A549 (cell line): ENCODE measurements at regions of chr2 and their contacts with region 1.

Region 1: DNA sequence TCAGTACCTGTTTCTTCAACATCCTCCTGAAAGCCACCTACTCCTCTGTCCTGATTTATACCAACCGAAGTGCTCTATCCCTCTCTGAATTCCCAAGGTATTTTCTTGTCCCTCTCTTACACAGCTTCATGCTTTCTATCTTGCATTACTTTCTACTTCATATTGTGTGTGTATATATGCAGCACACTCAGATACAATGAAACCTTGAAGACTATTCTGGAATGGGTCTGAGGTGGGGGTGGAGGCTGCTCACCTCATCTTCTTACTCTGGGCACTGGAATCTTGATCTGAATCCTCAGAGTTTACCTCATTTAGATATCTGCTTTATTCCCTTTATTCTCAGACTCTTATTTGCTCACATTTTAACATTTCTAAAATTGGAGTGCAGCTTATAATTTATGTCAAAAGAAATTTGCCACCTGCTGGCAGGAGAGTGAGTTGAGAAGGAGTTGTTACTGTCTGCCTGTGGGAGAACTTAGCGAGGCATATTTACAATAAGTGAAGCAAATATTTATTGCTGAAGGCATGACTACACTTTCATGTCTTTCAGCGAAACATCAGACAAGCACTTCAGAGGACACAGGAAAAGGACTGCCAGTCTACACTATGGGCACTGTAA is 16.6 kb upstream of the KIAA2012 start:
- DNase-seq: peak in 1 of 2 experiments; percentile 33
- ATAC-seq: peak; percentile 70 to 79; a peak in 5 of 6 replicates
- H3K4me3 ChIP-seq: no peak overlapping the region
- H3K27ac ChIP-seq: no peak overlapping the region
- H3K4me1 ChIP-seq: no peaks in the 10 kb centered on the region
- CTCF ChIP-seq: peak; percentile 40
- EP300 ChIP-seq: no peak
- POLR2A ChIP-seq: no peak
- RAD21 ChIP-seq: peak; percentile 33 to 36; a peak in 4 of 5 replicates

Region 2: DNA sequence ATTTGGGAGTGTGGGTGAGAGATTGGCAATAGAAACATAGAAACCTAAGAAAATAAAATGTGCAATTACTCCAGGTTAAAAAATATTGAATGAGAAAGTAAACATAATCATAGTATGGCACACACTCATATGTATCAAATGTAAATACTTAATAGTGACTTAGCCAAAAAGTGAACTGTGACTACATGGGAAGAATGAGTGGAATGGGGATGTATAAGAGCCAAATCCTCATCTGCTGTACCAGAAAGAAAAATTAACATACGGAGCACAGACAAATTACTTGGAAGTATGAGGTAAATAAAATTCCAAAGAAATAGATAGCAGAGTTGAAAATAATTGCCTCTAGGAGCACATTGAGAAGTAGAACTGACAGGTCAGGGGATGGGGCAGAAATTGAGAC is 703.4 kb before region 1 on chr2:
- CTCF ChIA-PET with region 1: no interaction called
- POLR2A ChIA-PET with region 1: no interaction called
- DNase-seq: no peak
- ATAC-seq: no peak
- H3K4me3 ChIP-seq: no peak overlapping the region
- H3K27ac ChIP-seq: no peak overlapping the region
- H3K4me1 ChIP-seq: no peaks in the 10 kb centered on the region
- CTCF ChIP-seq: no peak
- EP300 ChIP-seq: no peak
- POLR2A ChIP-seq: no peak
- RAD21 ChIP-seq: no peak

Region 3: GRCh38 chr2:202043475-202043874 is 13.0 kb before region 1 on chr2:
- CTCF ChIA-PET with region 1: interaction called, 11 read pairs
- POLR2A ChIA-PET with region 1: no interaction called
- DNase-seq: no peak
- ATAC-seq: no peak
- H3K4me3 ChIP-seq: no peak overlapping the region
- H3K27ac ChIP-seq: no peak overlapping the region
- H3K4me1 ChIP-seq: peaks cover 22% of the 10 kb centered on the region
- CTCF ChIP-seq: no peak
- EP300 ChIP-seq: no peak
- POLR2A ChIP-seq: no peak
- RAD21 ChIP-seq: no peak